Head of caudate nucleus (tissue), 42 donors: ENCODE measurements at regions of chr3 and their contacts with region 1.

Region 1: GRCh38 chr3:186852994-186853393 is 10.5 kb downstream of the ADIPOQ start:
- DNase-seq: no peak

Region 2: DNA sequence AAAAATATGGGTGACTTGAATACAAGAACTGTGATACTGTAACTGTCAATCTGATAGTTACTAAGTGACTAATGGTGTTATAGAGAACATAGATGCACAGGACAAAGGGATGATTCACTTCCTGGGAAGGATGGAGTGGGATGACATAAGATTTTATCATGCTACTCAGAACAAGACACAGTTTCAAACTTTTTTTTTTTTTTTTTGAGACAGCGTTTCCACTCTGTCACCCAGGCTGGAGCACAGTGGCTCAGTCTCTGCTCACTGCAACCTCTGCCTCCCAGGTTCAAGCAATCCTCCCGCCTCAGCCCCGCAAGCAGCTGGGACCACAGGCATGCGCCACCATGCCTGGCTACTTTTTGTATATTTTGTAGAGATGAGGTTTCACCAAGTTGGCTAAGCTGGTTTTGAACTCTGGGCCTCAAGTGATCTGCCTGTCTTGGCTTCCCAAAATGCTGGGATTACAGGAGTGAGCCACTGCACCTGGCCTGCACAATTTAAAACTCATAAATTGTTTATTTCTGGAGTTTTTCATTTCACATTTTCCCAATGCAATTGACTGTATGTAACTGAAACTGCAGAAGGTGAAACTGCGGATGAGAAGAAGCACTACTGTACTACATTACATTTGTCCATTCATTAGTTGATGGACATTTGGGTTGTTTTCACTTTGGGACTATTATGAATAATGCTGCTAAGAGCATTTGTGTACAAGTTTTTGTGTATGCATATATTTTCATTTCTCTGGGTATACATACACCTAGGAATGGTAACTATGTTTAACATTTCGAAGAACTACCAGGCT is 30.1 kb after region 1 on chr3:
- intact Hi-C with region 1: no loop called
- DNase-seq: peak in 11 of 42 donors; percentile 1 to 43 (median 10)

Region 3: GRCh38 chr3:187164885-187165543 is 312.0 kb after region 1 on chr3:
- intact Hi-C with region 1: loop called (anchors 5 kb)
- DNase-seq: peak in 16 of 42 donors; percentile 13 to 66 (median 30)

Region 4: GRCh38 chr3:187197057-187197649 is 344.2 kb after region 1 on chr3 and contains the start of gene RTP1:
- intact Hi-C with region 1: no loop called
- DNase-seq: peak in 19 of 42 donors; percentile 14 to 59 (median 26)